Natural killer cell (primary cell): ENCODE measurements at regions of chr12 and their contacts with region 1.

Region 1: DNA sequence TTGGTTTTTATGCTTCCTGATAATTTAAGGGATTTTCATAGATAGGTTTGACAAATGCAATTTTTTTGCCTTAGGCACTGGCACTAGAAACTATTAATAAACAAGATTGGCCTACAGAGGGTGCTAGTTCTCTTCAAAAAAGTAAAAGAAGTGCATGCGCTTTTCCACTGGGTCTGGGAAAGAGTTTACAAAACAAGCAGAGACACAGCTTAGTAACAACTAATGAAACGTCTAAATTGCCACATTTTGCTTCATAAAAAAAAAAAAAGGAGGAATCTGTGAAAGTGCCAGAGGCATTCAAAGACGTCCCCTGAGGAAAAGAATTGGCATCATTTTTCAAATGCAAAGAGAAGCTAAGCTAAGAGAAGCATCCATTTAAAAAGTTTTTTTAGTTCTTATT is 58.3 kb upstream of the EEA1 start:
- DNase-seq: peak in 1 of 2 donors; percentile 72
- ATAC-seq: peak; percentile 47 to 69 (median 61)
- H3K4me3 ChIP-seq: no peak overlapping the region
- H3K4me3 Mint-ChIP-seq: no peak overlapping the region
- H3K27ac ChIP-seq: no peak overlapping the region
- H3K27ac Mint-ChIP-seq: no peak overlapping the region
- H3K4me1 ChIP-seq: peaks cover 5% of the 10 kb centered on the region
- H3K4me1 Mint-ChIP-seq: peaks cover 0 to 4% of the 10 kb centered on the region in 2 donors
- H3K27me3 ChIP-seq: no peaks in the 10 kb centered on the region
- H3K27me3 Mint-ChIP-seq: peaks cover 6 to 16% of the 10 kb centered on the region in 2 donors
- CTCF ChIP-seq: peak; percentile 52

Region 2: DNA sequence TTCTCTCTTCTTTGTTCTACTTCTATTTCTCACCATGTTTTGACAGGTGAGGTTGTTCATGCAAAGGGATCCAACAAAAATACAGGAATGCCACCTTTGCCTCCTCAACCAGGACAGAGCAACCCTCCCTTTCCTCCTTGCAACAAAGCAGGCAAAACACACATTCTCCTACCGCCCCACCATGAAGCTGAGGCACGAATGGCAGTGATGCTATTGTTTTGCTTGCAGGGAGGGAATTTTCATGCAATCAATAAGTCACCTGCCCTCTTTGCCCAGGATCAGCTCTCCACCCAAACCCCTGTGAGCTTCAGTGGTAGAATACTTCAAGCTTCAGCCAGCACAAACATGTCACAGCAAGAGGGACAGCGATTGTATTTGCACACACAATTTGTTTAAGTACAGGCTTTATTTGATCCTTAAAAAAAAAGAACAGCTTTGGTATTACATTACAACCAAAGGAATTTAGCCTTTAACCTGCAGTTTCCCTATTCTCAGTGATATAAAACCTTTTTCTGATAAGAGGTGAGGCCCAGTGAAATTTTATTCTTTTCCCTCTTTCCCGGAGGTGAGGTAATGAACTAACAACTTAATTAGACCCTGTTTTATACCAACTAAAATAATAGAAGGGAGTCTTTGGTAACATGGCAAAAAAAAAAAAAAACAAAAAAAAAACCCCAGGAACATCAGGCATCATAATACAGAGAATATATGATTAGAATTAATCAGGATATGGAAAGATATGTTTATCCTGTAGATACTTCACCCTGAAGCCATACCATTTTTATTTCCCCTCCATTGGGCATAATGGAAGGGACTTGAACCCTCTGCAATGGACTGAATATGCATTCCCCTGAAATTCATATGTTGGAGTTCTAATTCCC is 28.7 kb after region 1 on chr12:
- intact Hi-C with region 1: no loop called
- DNase-seq: no peak
- ATAC-seq: no peak
- H3K4me3 ChIP-seq: no peak overlapping the region
- H3K4me3 Mint-ChIP-seq: no peak overlapping the region
- H3K27ac ChIP-seq: no peak overlapping the region
- H3K27ac Mint-ChIP-seq: no peak overlapping the region
- H3K4me1 ChIP-seq: no peaks in the 10 kb centered on the region
- H3K4me1 Mint-ChIP-seq: no peaks in the 10 kb centered on the region
- H3K27me3 ChIP-seq: no peaks in the 10 kb centered on the region
- H3K27me3 Mint-ChIP-seq: peaks cover 0 to 5% of the 10 kb centered on the region in 2 donors
- CTCF ChIP-seq: no peak

Region 3: GRCh38 chr12:93146263-93146939 is 159.0 kb after region 1 on chr12:
- intact Hi-C with region 1: no loop called
- DNase-seq: no peak
- ATAC-seq: no peak
- H3K4me3 ChIP-seq: no peak overlapping the region
- H3K4me3 Mint-ChIP-seq: no peak overlapping the region
- H3K27ac ChIP-seq: no peak overlapping the region
- H3K27ac Mint-ChIP-seq: no peak overlapping the region
- H3K4me1 ChIP-seq: no peaks in the 10 kb centered on the region
- H3K4me1 Mint-ChIP-seq: no peaks in the 10 kb centered on the region
- H3K27me3 ChIP-seq: no peaks in the 10 kb centered on the region
- H3K27me3 Mint-ChIP-seq: no peaks in the 10 kb centered on the region
- CTCF ChIP-seq: no peak

Region 4: DNA sequence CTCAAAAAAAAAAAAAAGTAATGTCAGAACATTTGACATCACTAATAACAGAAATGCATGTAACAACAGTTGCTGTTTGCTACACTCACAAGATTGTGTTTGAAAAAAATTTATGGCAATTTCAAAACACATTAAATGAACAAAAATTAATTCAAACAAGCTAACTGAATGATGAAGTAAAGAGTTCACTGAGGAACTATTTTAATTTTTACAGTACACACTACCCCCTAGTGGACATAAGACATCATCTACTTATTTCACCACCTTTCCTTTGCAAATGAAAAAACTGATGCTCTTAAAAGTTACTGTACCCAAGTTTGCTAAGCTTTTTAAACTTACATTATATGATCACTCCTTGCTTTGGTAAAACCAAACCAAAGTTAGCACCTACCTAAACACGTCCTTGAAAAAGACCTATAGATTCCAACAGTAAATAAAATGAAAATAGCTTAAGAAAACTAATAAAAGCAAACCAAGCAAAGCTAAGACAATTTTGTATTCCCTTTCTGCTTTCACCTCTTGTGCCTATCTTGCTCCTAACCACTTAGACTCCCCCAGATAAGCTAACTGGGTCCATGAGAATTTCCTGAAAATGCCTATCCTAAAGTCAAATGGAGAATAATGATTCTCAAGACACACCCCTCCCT is 432.1 kb after region 1 on chr12:
- intact Hi-C with region 1: loop called (anchors 1 kb)
- DNase-seq: peak in 1 of 2 donors; percentile 73
- ATAC-seq: peak; percentile 80 to 85 (median 83)
- H3K4me3 ChIP-seq: no peak overlapping the region
- H3K4me3 Mint-ChIP-seq: no peak overlapping the region
- H3K27ac ChIP-seq: no peak overlapping the region
- H3K27ac Mint-ChIP-seq: peak overlapping the region; percentile 8 to 54
- H3K4me1 ChIP-seq: peaks cover 6% of the 10 kb centered on the region
- H3K4me1 Mint-ChIP-seq: peaks cover 68 to 75% of the 10 kb centered on the region in 2 donors
- H3K27me3 ChIP-seq: no peaks in the 10 kb centered on the region
- H3K27me3 Mint-ChIP-seq: no peaks in the 10 kb centered on the region
- CTCF ChIP-seq: peak; percentile 72